Mammary epithelial cell (primary cell): ENCODE measurements at regions of chr10 and their contacts with region 1.

Region 1: DNA sequence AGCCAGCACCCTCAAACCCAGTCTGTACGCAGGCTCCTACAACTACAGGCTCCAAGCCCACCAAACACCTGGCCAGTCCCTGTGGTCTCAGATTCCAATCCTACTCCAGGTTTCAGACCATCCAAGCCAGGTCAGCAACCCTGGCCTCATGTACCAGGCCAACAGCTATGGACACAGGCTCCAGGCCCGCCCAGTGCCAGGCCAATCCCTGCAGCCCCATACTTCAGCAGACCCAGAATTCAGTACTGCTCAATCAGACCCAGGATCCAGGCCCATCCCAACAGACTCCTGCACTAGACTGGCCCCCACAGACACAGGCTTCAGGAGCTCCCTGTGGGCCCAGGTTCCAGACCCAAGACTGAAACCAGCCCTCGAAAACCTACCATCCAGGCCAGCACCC is 32.3 kb downstream of the HPSE2 start:
- DNase-seq: no peak
- H3K4me3 ChIP-seq: no peak overlapping the region
- H3K27ac ChIP-seq: no peak overlapping the region
- H3K4me1 ChIP-seq: no peaks in the 10 kb centered on the region
- H3K27me3 ChIP-seq: no peaks in the 10 kb centered on the region
- CTCF ChIP-seq: no peak

Region 2: GRCh38 chr10:98262571-98262970 is 940.7 kb before region 1 on chr10:
- CTCF ChIA-PET with region 1: no interaction called
- dilution Hi-C with region 1: no loop called
- in situ Hi-C with region 1: no loop called
- intact Hi-C with region 1: no loop called
- DNase-seq: peak; percentile 42
- H3K4me3 ChIP-seq: no peak overlapping the region
- H3K27ac ChIP-seq: no peak overlapping the region
- H3K4me1 ChIP-seq: peaks cover 2% of the 10 kb centered on the region
- H3K27me3 ChIP-seq: no peaks in the 10 kb centered on the region
- CTCF ChIP-seq: peak; percentile 47 to 82

Region 3: GRCh38 chr10:98778277-98778759 is 425.0 kb before region 1 on chr10:
- CTCF ChIA-PET with region 1: no interaction called
- dilution Hi-C with region 1: no loop called
- in situ Hi-C with region 1: no loop called
- intact Hi-C with region 1: no loop called
- DNase-seq: no peak
- H3K4me3 ChIP-seq: no peak overlapping the region
- H3K27ac ChIP-seq: no peak overlapping the region
- H3K4me1 ChIP-seq: no peaks in the 10 kb centered on the region
- H3K27me3 ChIP-seq: peaks cover 4% of the 10 kb centered on the region
- CTCF ChIP-seq: no peak

Region 4: DNA sequence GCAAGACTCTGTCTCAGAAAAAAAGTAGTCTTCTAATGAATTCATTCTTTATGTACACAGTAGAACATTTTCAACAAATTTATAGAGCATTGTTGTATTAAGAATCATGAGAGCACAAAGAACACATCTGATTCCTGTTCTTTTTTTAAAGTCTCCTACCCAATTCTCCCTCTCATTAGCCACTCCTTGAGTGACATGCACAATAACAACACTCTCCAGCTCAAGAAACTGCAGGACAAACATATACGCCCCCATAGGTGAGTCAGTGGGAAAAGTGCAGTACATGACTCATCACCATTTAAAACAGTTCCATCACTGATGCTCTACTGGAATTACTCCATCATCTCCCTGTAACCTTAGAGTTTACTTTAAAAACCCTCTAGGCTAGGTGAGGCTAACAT is 62.3 kb before region 1 on chr10:
- CTCF ChIA-PET with region 1: no interaction called
- dilution Hi-C with region 1: loop called (anchors 10 kb)
- in situ Hi-C with region 1: no loop called
- intact Hi-C with region 1: no loop called
- DNase-seq: peak; percentile 83
- H3K4me3 ChIP-seq: no peak overlapping the region
- H3K27ac ChIP-seq: no peak overlapping the region
- H3K4me1 ChIP-seq: peaks cover 2% of the 10 kb centered on the region
- H3K27me3 ChIP-seq: no peaks in the 10 kb centered on the region
- CTCF ChIP-seq: no peak

Region 5: GRCh38 chr10:99235658-99236626 is 32.6 kb after region 1 on chr10 and contains the start of gene HPSE2:
- CTCF ChIA-PET with region 1: no interaction called
- dilution Hi-C with region 1: no loop called
- in situ Hi-C with region 1: no loop called
- intact Hi-C with region 1: no loop called
- DNase-seq: no peak
- H3K4me3 ChIP-seq: no peak within 1 kb of the TSS
- H3K27ac ChIP-seq: no peak within 1 kb of the TSS
- H3K4me1 ChIP-seq: no peaks in the 10 kb centered on the region
- H3K27me3 ChIP-seq: peaks cover 52% of the 10 kb centered on the region
- CTCF ChIP-seq: no peak
- total RNA-seq, gene HPSE2: not detected

Region 6: DNA sequence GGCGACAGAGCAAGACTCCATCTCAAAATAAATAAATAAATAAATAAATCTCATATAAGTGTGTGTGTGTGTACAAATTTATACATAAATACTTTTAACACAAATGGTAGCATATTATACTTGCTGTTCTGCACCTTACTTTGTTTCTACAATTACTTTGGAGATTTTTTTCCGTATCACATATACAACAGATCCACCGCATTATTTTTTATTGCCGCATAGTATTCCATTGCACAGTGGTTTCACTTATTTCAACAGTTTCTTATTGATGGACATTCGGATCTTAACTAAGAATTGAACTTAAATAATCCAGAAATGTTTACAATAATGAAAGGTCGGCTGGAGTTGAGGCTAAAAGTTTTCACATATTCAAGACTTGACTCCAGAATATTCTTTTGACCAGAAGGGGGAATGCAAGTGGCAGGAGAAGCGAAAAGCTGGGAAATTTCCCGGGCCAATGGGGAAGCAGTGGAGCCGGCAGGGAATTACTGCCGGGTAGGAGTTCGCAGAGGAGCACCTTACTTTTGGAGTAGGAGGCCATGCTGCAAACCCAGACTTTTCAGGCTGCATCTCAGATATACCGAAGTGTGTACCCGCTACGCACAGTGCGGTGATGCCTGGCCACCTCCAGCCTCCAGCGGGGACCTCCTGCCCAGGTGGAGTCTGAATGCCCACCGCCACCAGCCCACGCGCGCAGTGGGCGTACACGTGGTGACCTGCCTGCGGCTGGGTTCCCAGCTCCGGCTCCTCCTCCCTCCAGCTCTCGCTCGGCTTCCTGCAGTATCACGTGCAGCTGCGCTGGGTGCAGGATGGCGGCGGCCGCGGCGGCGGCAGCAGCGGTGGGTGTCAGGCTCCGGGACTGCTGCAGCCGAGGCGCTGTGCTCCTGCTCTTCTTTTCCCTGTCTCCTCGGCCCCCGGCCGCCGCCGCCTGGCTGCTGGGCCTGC is 125.5 kb after region 1 on chr10 and contains the start of gene CNNM1:
- CTCF ChIA-PET with region 1: no interaction called
- dilution Hi-C with region 1: no loop called
- in situ Hi-C with region 1: no loop called
- intact Hi-C with region 1: no loop called
- DNase-seq: peak; percentile 23
- H3K4me3 ChIP-seq: peak within 1 kb of the TSS; percentile 44 to 57 (median 47)
- H3K27ac ChIP-seq: no peak within 1 kb of the TSS
- H3K4me1 ChIP-seq: peaks cover 16% of the 10 kb centered on the region
- H3K27me3 ChIP-seq: peaks cover 7% of the 10 kb centered on the region
- CTCF ChIP-seq: no peak
- total RNA-seq, gene CNNM1: 0.52 to 2.0 TPM